Esophagus muscularis mucosa (tissue), 4 donors: ENCODE measurements at regions of chr4 and their contacts with region 1.

Region 1: DNA sequence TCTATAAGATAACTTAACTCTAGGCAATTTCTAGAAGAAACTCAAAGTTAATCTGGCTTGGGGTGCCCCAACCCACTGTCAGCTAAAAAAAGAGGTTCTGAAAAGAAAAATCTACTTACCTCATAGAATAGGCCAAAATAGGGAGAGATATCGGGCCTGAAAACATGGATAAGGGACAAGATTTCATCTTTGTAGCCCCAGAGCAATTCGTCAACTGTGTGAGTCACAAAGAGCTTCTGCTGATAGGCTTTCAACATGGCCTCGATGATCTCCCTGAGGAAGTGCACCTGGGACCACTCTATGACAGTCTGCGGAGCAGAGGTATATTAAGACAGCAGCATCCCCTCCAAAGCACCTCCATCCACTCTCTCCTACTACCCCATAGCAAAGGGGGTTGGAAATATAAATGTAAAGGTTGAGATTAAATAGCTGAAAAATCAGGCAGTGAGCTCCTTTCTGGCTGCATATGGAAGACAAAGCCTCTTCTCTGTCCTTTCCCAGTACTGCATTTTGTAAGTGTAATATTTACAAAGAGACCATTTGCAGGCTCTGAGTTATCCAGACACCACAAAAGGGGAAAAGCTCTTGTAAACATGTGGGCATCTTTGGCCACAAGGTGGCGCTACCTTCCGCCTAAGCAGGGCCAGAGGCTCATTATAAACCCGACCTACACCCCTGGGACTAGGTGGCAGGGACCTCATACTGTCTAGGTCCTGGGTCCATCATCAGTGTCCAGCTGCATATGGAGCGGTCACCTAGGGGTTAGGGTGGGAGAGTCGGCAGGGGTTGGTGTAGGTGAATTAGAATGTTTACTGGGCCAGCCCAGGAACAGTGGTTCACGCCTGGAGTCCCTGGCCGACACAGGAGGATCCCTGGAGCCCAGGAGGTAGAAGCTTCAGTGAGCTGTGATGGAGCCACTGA is 31.5 kb upstream of the NUP54 start:
- DNase-seq: peak; percentile 94
- H3K4me3 ChIP-seq: no peak overlapping the region
- H3K27ac ChIP-seq: peak overlapping the region in 1 of 4 donors; percentile 35
- H3K4me1 ChIP-seq: peaks cover 13 to 20% (median 19%) of the 10 kb centered on the region in 4 donors
- H3K27me3 ChIP-seq: no peaks in the 10 kb centered on the region
- CTCF ChIP-seq: peak; percentile 83 to 92 (median 91)
- EP300 ChIP-seq: no peak
- POLR2A ChIP-seq: no peak

Region 2: DNA sequence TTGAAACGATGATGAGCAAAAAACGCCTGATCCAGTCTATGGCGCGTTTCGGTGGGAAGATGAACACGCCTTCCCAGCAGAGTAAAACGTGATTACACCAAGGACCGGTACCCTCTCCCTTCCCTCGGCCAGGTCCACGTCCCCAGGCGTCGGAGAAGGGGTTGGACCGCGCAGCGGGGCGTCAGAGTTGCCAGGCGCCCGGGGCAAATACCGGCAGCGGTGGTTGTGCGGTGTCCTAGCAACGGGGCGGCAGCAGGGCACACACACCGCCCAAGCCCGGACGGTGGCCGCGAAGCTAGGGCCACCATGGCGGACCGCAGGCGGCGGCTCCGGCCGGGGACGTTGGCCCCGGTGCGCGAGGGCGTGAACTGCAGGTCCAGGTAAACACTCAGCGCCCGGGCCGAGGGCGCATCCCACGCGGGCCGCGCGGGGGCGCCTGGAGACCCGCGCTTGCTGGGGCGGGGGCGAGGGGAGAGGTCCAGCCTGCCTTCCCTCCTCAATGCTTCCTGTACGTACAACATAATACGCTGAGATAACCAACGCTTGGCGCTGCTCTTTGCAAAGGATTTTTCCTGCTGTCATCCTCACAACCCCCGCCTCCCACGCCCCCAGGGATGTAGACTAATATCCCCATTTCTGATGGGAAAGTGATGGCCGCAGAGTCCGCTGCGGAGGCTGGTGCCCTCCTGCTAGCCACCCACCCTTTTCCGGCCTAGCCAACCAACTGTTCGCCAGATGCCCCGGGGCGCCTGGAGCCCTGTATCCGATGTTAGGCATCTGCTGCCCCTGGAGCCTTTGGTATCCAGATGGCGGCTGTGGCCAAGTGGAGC is 72.0 kb after region 1 on chr4 and contains the start of gene FAM47E:
- intact Hi-C with region 1: loop called (anchors 2 kb)
- DNase-seq: no peak
- H3K4me3 ChIP-seq: peak within 1 kb of the TSS; percentile 67 to 77 (median 70)
- H3K27ac ChIP-seq: peak within 1 kb of the TSS; percentile 10 to 53 (median 44)
- H3K4me1 ChIP-seq: peaks cover 3 to 17% (median 15%) of the 10 kb centered on the region in 4 donors
- H3K27me3 ChIP-seq: no peaks in the 10 kb centered on the region
- CTCF ChIP-seq: peak; percentile 34 to 55 (median 38)
- EP300 ChIP-seq: no peak
- POLR2A ChIP-seq: no peak
- total RNA-seq, gene FAM47E: 2.0 to 2.2 (median 2.1) TPM

Region 3: GRCh38 chr4:76305971-76306881 is 126.6 kb after region 1 on chr4 and contains the start of gene STBD1:
- intact Hi-C with region 1: loop called (anchors 5 kb)
- DNase-seq: no peak
- H3K4me3 ChIP-seq: peak within 1 kb of the TSS; percentile 63 to 95 (median 73)
- H3K27ac ChIP-seq: peak within 1 kb of the TSS; percentile 88 to 90 (median 90)
- H3K4me1 ChIP-seq: peaks cover 28 to 52% (median 45%) of the 10 kb centered on the region in 4 donors
- H3K27me3 ChIP-seq: no peaks in the 10 kb centered on the region
- CTCF ChIP-seq: no peak
- EP300 ChIP-seq: no peak
- POLR2A ChIP-seq: peak; percentile 54
- total RNA-seq, gene STBD1: 14.8 to 30.2 (median 17.7) TPM

Region 4: DNA sequence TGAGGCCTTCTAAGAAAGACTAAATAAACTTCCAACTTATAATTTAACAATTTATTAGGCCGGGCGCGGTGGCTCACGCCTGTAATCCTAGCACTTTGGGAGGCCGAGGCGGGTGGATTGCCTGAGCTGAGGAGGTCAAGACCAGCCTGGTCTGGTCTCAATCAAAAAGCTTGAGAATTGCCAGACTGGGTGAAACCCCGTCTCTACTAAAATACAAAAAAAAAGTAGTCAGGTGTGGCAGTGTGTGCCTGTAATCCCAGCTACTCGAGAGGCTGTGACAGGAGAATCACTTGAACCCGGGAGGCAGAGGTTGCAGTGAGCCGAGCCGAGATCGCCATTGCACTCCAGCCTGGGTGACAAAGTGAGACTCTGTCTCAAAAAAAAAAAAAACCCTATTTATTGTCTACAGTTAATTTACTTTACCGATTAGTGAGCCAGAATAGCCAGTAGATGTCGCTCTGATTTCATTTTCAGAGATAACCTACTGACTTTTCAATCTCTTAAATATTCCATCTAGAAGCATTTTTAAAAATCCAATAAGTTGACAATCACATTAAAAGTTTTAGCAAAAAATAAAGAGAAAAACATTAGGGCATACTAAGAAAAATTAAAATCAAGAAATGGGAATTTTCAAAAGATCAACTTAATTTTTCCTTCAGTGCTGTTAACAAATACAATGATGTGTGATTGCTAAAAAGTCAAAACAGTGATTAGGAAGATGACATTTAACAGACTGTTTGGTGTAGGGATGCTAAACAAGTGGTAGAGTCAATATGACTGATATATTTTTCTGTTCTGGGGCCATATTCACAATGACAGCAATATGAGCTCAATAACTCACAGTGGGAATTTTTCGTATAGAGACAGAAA is 251.1 kb after region 1 on chr4:
- intact Hi-C with region 1: loop called (anchors 2 kb)
- DNase-seq: no peak
- H3K4me3 ChIP-seq: no peak overlapping the region
- H3K27ac ChIP-seq: no peak overlapping the region
- H3K4me1 ChIP-seq: peaks cover 0 to 29% (median 20%) of the 10 kb centered on the region in 4 donors
- H3K27me3 ChIP-seq: no peaks in the 10 kb centered on the region
- CTCF ChIP-seq: peak; percentile 71 to 74 (median 73)
- EP300 ChIP-seq: no peak
- POLR2A ChIP-seq: no peak

Region 5: GRCh38 chr4:76504613-76505465 is 325.2 kb after region 1 on chr4:
- intact Hi-C with region 1: loop called (anchors 10 kb)
- DNase-seq: no peak
- H3K4me3 ChIP-seq: no peak overlapping the region
- H3K27ac ChIP-seq: no peak overlapping the region
- H3K4me1 ChIP-seq: peaks cover 0 to 10% (median 4%) of the 10 kb centered on the region in 4 donors
- H3K27me3 ChIP-seq: no peaks in the 10 kb centered on the region
- CTCF ChIP-seq: peak; percentile 69 to 74 (median 74)
- EP300 ChIP-seq: no peak
- POLR2A ChIP-seq: no peak

Region 6: GRCh38 chr4:76931087-76931486 is 751.4 kb after region 1 on chr4:
- intact Hi-C with region 1: no loop called
- DNase-seq: no peak
- H3K4me3 ChIP-seq: no peak overlapping the region
- H3K27ac ChIP-seq: no peak overlapping the region
- H3K4me1 ChIP-seq: no peaks in the 10 kb centered on the region
- H3K27me3 ChIP-seq: no peaks in the 10 kb centered on the region
- CTCF ChIP-seq: no peak
- EP300 ChIP-seq: no peak
- POLR2A ChIP-seq: no peak